A673 (cell line): ENCODE measurements at regions of chr6 and their contacts with region 1.

Region 1: DNA sequence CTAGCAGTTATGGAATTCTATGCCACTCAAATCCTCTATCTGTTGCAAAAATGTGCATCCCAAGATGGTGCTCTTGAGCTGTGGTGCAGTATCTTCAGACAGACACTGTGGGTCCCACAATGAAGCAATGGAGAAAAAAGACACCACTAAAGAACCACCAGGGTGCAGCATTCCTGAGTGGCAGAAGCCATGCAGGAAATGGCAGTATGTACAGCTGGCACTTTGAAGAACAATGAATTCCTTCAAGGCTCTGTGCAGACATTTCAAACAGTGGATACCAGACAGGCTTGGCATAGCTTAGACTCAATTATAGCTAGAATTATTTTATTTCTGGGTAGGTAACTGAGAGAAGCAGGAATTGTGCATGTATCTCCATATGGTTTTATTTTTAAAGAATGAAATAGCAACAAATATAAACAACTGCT is 24.0 kb upstream of the HDAC2 start:
- DNase-seq: peak; percentile 88
- H3K4me3 ChIP-seq: no peak overlapping the region
- H3K27ac ChIP-seq: no peak overlapping the region
- H3K4me1 ChIP-seq: no peaks in the 10 kb centered on the region
- H3K27me3 ChIP-seq: no peaks in the 10 kb centered on the region
- CTCF ChIP-seq: peak; percentile 87

Region 2: DNA sequence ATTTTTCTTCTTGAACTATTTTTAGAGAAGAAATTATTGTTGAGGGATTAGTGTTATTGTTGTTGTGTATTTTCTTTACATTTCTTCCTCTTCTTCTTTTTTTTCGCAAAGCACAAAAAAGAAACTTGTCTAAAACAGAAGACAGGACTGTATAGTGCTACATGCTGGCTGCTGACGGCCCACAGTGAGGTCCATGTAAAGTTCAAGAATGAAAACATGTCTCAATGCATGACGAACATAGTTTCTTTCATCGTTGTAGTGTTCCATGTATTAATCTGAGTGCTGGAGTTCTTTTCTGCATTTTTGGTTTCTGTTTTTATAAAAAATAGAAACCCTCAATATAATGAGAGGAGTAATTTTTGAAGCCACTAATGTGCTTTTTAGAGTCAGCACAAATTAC is 600.7 kb before region 1 on chr6:
- CTCF ChIA-PET with region 1: no interaction called
- POLR2A ChIA-PET with region 1: no interaction called
- intact Hi-C with region 1: no loop called
- DNase-seq: no peak
- H3K4me3 ChIP-seq: no peak overlapping the region
- H3K27ac ChIP-seq: no peak overlapping the region
- H3K4me1 ChIP-seq: peaks cover 5% of the 10 kb centered on the region
- H3K27me3 ChIP-seq: no peaks in the 10 kb centered on the region
- CTCF ChIP-seq: no peak

Region 3: DNA sequence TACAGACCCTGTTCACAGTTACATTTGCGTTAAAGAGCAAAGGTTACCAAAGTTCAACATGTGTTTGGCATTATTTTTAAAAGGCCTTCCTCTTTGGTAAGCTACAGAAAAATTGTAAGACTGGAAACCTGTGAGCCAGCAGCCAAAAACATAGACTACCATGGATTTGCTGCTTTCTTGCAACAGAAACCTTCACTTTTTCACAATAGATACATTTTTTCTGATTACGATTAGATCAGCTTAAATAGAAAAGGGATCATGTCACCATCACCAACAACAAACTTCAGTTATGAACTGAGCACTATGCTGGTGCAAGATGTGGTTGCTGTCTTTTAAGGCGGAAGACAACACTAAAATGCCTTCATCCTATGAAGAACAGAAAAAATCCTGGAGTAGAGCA is 250.1 kb before region 1 on chr6:
- CTCF ChIA-PET with region 1: no interaction called
- POLR2A ChIA-PET with region 1: no interaction called
- intact Hi-C with region 1: no loop called
- DNase-seq: no peak
- H3K4me3 ChIP-seq: no peak overlapping the region
- H3K27ac ChIP-seq: no peak overlapping the region
- H3K4me1 ChIP-seq: no peaks in the 10 kb centered on the region
- H3K27me3 ChIP-seq: no peaks in the 10 kb centered on the region
- CTCF ChIP-seq: no peak

Region 4: DNA sequence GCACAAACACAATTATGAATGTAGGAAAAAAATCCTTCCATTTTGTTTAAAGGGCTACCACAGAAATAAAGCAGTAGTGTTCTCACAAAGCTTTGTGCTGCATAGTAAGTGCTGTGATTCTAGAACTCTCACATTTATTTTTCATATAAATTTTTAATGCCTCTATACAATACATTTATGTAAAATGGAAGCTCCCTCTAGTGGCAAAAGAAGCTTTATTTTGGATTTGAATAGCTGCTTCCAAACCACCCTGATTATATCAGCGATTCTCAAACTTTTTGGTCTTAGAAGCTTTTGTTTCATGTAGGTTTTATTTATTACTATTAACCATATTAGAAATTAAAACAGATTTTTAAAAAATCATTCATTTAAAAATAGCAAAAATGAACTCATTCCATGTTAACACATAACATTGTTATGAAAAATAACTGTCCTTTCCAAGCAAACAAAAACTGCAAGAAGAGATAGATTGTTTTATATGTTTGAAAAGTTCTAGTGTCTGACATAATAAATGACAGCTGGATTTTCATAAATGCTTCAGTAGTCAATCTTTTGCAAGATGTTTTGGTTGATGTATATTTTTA is 309.5 kb after region 1 on chr6:
- CTCF ChIA-PET with region 1: interaction called, 6 read pairs
- POLR2A ChIA-PET with region 1: no interaction called
- intact Hi-C with region 1: loop called (anchors 2 kb)
- DNase-seq: peak; percentile 18
- H3K4me3 ChIP-seq: no peak overlapping the region
- H3K27ac ChIP-seq: no peak overlapping the region
- H3K4me1 ChIP-seq: no peaks in the 10 kb centered on the region
- H3K27me3 ChIP-seq: peaks cover 5% of the 10 kb centered on the region
- CTCF ChIP-seq: peak; percentile 68